ENCODE measurements at regions of chr15 and their contacts with region 1.

Region 1: DNA sequence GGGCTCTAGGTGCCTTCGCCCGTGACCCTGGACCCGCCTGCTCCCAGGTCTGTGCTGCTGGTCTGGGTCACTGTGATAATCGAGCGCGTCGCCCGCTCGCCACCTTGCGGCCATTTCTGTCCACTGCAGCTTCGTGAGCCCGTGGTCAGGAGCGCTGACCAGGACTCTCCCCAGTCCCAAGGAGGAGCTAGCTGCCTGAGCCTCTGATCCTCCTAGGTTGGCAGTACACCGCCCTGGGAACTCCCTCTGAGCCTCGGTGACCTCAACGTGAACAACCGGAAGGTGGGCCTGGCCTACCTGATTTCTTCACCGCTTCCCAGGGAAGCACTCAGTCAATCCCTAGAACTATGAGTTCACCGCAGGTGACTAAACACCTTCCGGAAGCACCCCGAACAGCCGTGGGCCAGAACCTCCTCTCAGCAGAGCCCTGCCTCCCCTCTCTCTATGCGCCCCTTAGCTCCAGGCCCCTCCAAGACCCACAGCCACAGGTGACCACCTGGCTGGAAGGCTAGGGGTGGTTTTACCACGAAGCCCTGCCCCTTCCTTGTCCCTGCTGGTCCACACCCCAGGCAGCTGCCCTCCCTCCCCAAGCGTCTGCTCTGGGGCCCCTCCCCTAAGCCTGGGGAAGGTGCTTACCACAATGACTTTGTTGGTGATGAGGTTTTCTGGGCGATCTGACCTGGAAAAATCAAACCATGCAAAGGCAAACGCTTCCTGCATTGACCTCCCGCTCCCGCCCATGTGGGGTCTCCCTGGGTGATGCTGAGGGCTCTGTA is 9.7 kb downstream of the PLA2G4D start:
- DNase-seq: peak; percentile 85
- ATAC-seq: peak; percentile 85
- H3K4me3 Mint-ChIP-seq: no peak overlapping the region
- H3K27ac Mint-ChIP-seq: no peak overlapping the region
- H3K4me1 Mint-ChIP-seq: peaks cover 26% of the 10 kb centered on the region
- H3K27me3 Mint-ChIP-seq: no peaks in the 10 kb centered on the region; the same call in 1 of the 2 replicates
- CTCF ChIP-seq: peak; percentile 94

Region 2: GRCh38 chr15:41989259-41989933 is 95.3 kb before region 1 on chr15:
- CTCF ChIA-PET with region 1: interaction called, 121 read pairs
- POLR2A ChIA-PET with region 1: interaction called, 3 read pairs
- DNase-seq: peak; percentile 98
- ATAC-seq: peak; percentile 95
- H3K4me3 Mint-ChIP-seq: no peak overlapping the region
- H3K27ac Mint-ChIP-seq: no peak overlapping the region
- H3K4me1 Mint-ChIP-seq: peaks cover 6% of the 10 kb centered on the region
- H3K27me3 Mint-ChIP-seq: no peaks in the 10 kb centered on the region
- CTCF ChIP-seq: peak; percentile 97

Region 3: GRCh38 chr15:42056934-42057779 is 27.5 kb before region 1 on chr15:
- CTCF ChIA-PET with region 1: interaction called, 23 read pairs
- POLR2A ChIA-PET with region 1: no interaction called
- DNase-seq: peak; percentile 89
- ATAC-seq: peak; percentile 96
- H3K4me3 Mint-ChIP-seq: peak overlapping the region; percentile 48
- H3K27ac Mint-ChIP-seq: peak overlapping the region; percentile 57; the same call in 1 of the 2 replicates
- H3K4me1 Mint-ChIP-seq: peaks cover 12% of the 10 kb centered on the region
- H3K27me3 Mint-ChIP-seq: no peaks in the 10 kb centered on the region
- CTCF ChIP-seq: 0 out of 2 replicates have a peak, but pooled peaks have one; percentile 30

Region 4: GRCh38 chr15:42072141-42072685 is 12.4 kb before region 1 on chr15:
- CTCF ChIA-PET with region 1: interaction called, 164 read pairs
- POLR2A ChIA-PET with region 1: no interaction called
- DNase-seq: no peak
- ATAC-seq: no peak
- H3K4me3 Mint-ChIP-seq: no peak overlapping the region
- H3K27ac Mint-ChIP-seq: no peak overlapping the region
- H3K4me1 Mint-ChIP-seq: peaks cover 3% of the 10 kb centered on the region
- H3K27me3 Mint-ChIP-seq: no peaks in the 10 kb centered on the region
- CTCF ChIP-seq: no peak

Region 5: GRCh38 chr15:42118650-42119445 is 34.2 kb after region 1 on chr15:
- CTCF ChIA-PET with region 1: interaction called, 32 read pairs
- POLR2A ChIA-PET with region 1: no interaction called
- DNase-seq: no peak
- ATAC-seq: peak; percentile 90
- H3K4me3 Mint-ChIP-seq: 0 out of 2 replicates have a peak overlapping the region, but pooled peaks have one; percentile 4
- H3K27ac Mint-ChIP-seq: no peak overlapping the region
- H3K4me1 Mint-ChIP-seq: peaks cover 13% of the 10 kb centered on the region
- H3K27me3 Mint-ChIP-seq: peaks cover 4% of the 10 kb centered on the region; the same call in 1 of the 2 replicates
- CTCF ChIP-seq: no peak